Brain microvascular endothelial cell (primary cell): ENCODE measurements at regions of chr20 and their contacts with region 1.

Region 1: GRCh38 chr20:37270576-37271420 is 9.2 kb upstream of the GHRH start:
- DNase-seq: peak; percentile 66
- H3K4me3 ChIP-seq: no peak overlapping the region
- H3K27ac ChIP-seq: peak overlapping the region; percentile 55
- H3K27me3 ChIP-seq: no peaks in the 10 kb centered on the region
- CTCF ChIP-seq: no peak

Region 2: GRCh38 chr20:36886859-36887751 is 383.7 kb before region 1 on chr20:
- in situ Hi-C with region 1: no loop called
- DNase-seq: peak; percentile 64
- H3K4me3 ChIP-seq: peak overlapping the region; percentile 18
- H3K27ac ChIP-seq: no peak overlapping the region
- H3K27me3 ChIP-seq: no peaks in the 10 kb centered on the region
- CTCF ChIP-seq: peak; percentile 98

Region 3: GRCh38 chr20:37527638-37528441 is 257.0 kb after region 1 on chr20 and contains the start of gene BLCAP:
- in situ Hi-C with region 1: loop called (anchors 25 kb)
- DNase-seq: peak; percentile 82
- H3K4me3 ChIP-seq: peak within 1 kb of the TSS; percentile 99
- H3K27ac ChIP-seq: peak within 1 kb of the TSS; percentile 100
- H3K27me3 ChIP-seq: no peaks in the 10 kb centered on the region
- CTCF ChIP-seq: no peak